Activated B cell treated with CpG ODN at 0.5 μM for 24 hours (primary cell): ENCODE measurements at regions of chr5 and their contacts with region 1.

Region 1: DNA sequence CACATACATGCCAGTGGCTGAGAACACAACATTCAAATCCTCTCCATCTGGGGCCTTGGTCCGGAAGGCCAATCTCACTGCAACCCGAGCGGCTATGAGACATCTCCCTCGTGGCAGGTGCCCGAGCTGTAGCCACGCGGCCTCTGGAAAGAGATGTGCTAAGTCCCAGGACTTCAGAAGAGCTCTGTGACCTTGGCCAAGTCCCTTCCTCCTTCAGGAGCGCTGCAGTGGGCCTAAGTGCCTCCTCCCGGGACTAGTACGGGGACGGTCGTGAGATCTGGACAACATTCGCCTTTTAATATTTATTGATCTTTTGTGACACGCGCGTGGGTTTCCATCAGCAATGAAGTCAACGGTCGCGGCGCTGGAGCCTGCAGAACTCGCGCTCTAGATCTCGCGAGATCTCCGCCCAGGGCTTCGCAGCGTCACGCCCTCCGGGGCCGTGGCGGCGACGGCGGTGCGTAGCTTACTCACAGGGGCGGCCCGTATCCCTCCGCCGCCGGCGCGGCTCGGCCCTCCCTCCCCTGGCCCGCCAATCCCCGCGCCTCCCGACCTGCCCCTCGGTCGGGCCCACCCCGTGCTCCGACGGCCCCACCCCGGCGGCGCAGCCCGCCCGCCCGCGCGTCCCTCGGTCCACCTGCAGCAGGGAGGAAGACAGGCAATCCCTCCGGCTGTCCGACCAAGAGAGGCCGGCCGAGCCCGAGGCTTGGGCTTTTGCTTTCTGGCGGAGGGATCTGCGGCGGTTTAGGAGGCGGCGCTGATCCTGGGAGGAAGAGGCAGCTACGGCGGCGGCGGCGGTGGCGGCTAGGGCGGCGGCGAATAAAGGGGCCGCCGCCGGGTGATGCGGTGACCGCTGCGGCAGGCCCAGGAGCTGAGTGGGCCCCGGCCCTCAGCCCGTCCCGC is at the start of gene UBE2D2:
- DNase-seq: peak; percentile 95
- ATAC-seq: peak; percentile 86
- H3K4me3 Mint-ChIP-seq: peak within 1 kb of the TSS; percentile 93
- H3K27ac Mint-ChIP-seq: peak within 1 kb of the TSS; percentile 95
- H3K4me1 Mint-ChIP-seq: peaks cover 41% of the 10 kb centered on the region
- H3K27me3 Mint-ChIP-seq: no peaks in the 10 kb centered on the region
- CTCF ChIP-seq: no peak
- total RNA-seq, gene UBE2D2: 152 and 172 TPM in 2 replicates

Region 2: GRCh38 chr5:139341650-139342422 is 219.2 kb before region 1 on chr5 and contains the start of gene PAIP2:
- CTCF ChIA-PET with region 1: no interaction called
- POLR2A ChIA-PET with region 1: interaction called, 4 read pairs
- intact Hi-C with region 1: loop called (anchors 1 kb)
- DNase-seq: peak; percentile 95
- ATAC-seq: peak; percentile 87
- H3K4me3 Mint-ChIP-seq: peak within 1 kb of the TSS; percentile 96
- H3K27ac Mint-ChIP-seq: peak within 1 kb of the TSS; percentile 95
- H3K4me1 Mint-ChIP-seq: peaks cover 52% of the 10 kb centered on the region
- H3K27me3 Mint-ChIP-seq: no peaks in the 10 kb centered on the region
- CTCF ChIP-seq: no peak
- total RNA-seq, gene PAIP2: 79.7 and 80.8 TPM in 2 replicates

Region 3: DNA sequence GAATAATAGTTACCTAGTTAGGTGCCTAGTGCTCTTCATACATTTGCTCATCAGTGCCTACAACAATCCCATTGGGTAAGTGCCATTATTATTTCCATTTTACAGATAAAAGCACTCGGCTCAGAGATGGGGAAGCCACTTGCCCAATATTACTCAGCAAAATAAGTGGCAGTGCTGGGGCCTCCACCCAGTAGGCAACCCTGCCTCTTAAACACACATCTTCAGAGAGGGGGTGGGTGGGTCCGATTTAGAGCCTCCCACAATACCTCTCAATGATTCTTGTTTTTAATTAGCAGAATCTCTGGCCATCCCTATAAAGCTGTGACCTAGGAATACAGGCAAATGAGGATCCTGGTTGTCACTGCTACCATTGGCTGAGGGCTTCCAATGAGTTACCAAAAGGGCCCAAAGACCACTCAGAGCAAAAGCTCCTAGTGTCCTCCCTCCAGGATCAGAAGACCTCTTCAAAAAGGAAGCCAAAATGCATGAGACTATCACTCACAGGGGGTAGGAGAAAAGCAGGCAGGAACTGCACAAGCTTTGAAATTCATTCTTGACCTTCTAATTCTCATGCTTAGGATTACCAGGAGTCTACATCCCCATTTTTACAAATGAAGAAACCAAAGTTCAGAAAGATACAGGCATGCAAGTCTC is 35.9 kb before region 1 on chr5:
- CTCF ChIA-PET with region 1: interaction called, 3 read pairs
- POLR2A ChIA-PET with region 1: interaction called, 37 read pairs
- intact Hi-C with region 1: loop called (anchors 1 kb)
- DNase-seq: no peak
- ATAC-seq: peak; percentile 43
- H3K4me3 Mint-ChIP-seq: peak overlapping the region; percentile 71
- H3K27ac Mint-ChIP-seq: peak overlapping the region; percentile 91
- H3K4me1 Mint-ChIP-seq: peaks cover 43% of the 10 kb centered on the region
- H3K27me3 Mint-ChIP-seq: no peaks in the 10 kb centered on the region
- CTCF ChIP-seq: no peak

Region 4: GRCh38 chr5:139593716-139594319 is 32.8 kb after region 1 on chr5:
- CTCF ChIA-PET with region 1: no interaction called
- POLR2A ChIA-PET with region 1: interaction called, 11 read pairs
- intact Hi-C with region 1: no loop called
- DNase-seq: no peak
- ATAC-seq: no peak
- H3K4me3 Mint-ChIP-seq: no peak overlapping the region
- H3K27ac Mint-ChIP-seq: no peak overlapping the region
- H3K4me1 Mint-ChIP-seq: peaks cover 72% of the 10 kb centered on the region
- H3K27me3 Mint-ChIP-seq: no peaks in the 10 kb centered on the region
- CTCF ChIP-seq: no peak

Region 5: GRCh38 chr5:139651853-139652787 is 91.1 kb after region 1 on chr5:
- CTCF ChIA-PET with region 1: interaction called, 3 read pairs
- POLR2A ChIA-PET with region 1: interaction called, 13 read pairs
- intact Hi-C with region 1: no loop called
- DNase-seq: peak; percentile 91
- ATAC-seq: peak; percentile 56
- H3K4me3 Mint-ChIP-seq: peak overlapping the region; percentile 98
- H3K27ac Mint-ChIP-seq: peak overlapping the region; percentile 85
- H3K4me1 Mint-ChIP-seq: peaks cover 76% of the 10 kb centered on the region
- H3K27me3 Mint-ChIP-seq: no peaks in the 10 kb centered on the region
- CTCF ChIP-seq: no peak

Region 6: DNA sequence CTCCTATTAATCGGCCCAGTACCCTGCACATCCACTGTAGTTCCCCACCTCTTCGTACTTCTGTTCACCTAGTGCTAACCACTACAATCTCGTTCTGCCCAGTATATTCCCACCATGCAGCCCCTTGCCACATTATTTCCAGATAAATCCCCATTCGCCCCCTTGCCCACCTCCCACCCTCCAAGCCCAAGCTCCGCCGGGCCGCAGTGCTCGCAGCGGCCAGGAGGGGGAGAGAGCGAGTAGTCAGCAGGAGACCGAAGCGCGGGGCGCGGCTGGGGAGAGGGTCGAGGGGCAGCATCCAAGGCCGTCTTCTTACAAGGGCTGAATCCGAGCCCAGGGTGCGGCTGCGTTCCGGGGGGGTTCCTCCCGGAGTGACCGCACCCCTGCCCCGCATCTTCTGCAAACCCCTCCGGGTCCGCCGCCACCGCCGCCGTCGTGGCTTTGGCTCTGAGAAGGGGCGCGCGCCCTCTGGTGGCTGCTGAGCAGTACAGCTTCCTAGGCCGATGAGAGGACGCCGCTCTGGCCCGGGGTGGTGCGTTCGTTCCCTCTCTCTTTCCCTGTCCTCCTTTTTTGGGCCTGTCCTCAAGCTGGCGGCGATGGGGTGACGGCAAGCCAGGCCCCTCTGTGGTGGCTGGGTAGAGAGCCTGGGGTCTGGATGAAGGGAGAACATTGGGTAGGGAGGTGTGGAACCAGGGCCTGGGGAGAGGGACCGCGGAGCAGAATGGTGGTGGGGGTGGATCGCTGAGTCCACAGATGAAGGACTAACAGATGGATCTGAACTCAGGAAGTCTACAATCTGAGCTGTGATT is 204.6 kb after region 1 on chr5:
- CTCF ChIA-PET with region 1: interaction called, 3 read pairs
- POLR2A ChIA-PET with region 1: no interaction called
- intact Hi-C with region 1: loop called (anchors 5 kb)
- DNase-seq: peak; percentile 87
- ATAC-seq: peak; percentile 86
- H3K4me3 Mint-ChIP-seq: peak overlapping the region; percentile 74
- H3K27ac Mint-ChIP-seq: peak overlapping the region; percentile 56
- H3K4me1 Mint-ChIP-seq: peaks cover 25% of the 10 kb centered on the region
- H3K27me3 Mint-ChIP-seq: peaks cover 9% of the 10 kb centered on the region
- CTCF ChIP-seq: peak; percentile 98

Region 7: DNA sequence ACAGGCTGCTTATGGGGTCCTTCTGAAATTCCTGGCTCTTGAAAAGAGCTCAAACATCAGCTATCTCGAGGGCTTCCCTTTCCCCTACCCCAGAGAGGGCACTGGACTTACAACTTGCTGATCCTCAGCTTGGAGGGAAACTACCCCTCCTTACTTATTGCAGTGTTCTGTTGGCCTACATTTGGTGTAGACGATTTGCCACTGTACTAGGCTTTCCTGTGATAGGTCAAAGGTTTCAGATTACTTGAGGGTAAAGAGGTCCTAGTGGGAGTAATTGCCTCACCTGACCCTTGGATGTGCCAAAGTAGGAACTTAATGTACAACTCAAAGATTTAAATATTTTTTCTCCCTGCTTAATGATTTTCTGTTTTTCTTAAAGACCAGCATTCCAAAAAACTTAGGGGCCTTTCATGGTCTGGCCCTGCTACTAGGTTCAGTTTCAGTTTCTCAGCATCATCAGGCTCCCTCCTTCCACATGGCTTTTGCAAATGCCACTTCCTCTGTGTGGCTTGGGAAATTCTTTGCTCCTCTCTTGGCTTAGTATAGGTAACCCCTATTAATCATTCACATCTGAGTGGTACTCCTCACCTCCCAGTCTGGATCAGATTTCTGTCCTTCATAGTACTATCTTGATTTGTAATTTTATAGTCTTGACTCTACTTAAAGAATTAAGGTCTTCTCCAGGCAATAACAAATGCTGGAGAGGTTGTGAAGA is 646.4 kb after region 1 on chr5:
- CTCF ChIA-PET with region 1: no interaction called
- POLR2A ChIA-PET with region 1: no interaction called
- intact Hi-C with region 1: no loop called
- DNase-seq: no peak
- ATAC-seq: no peak
- H3K4me3 Mint-ChIP-seq: no peak overlapping the region
- H3K27ac Mint-ChIP-seq: no peak overlapping the region
- H3K4me1 Mint-ChIP-seq: peaks cover 3% of the 10 kb centered on the region
- H3K27me3 Mint-ChIP-seq: no peaks in the 10 kb centered on the region
- CTCF ChIP-seq: no peak